Activated T-helper 2 cell treated with anti-CD3 and anti-CD28 coated beads, Interferon-gamma antibody, Interleukin-2, Interleukin-4, amounts not matched to agents 10 μg/mL and 5 μg/mL and 100 μg/mL, durations not matched to agents 14 hours and 24 hours and 36 hours (primary cell): ENCODE measurements at regions of chr1 and their contacts with region 1.

Region 1: GRCh38 chr1:82517586-82517985 is 716.9 kb downstream of the ADGRL2 start:
- DNase-seq: no peak
- H3K4me3 Mint-ChIP-seq: no peak overlapping the region
- H3K27ac Mint-ChIP-seq: no peak overlapping the region
- H3K4me1 Mint-ChIP-seq: no peaks in the 10 kb centered on the region
- H3K27me3 Mint-ChIP-seq: no peaks in the 10 kb centered on the region

Region 2: GRCh38 chr1:82449658-82450057 is 67.9 kb before region 1 on chr1:
- intact Hi-C with region 1: loop called (anchors 10 kb)
- DNase-seq: no peak
- H3K4me3 Mint-ChIP-seq: no peak overlapping the region
- H3K27ac Mint-ChIP-seq: no peak overlapping the region
- H3K4me1 Mint-ChIP-seq: peaks cover 4% of the 10 kb centered on the region
- H3K27me3 Mint-ChIP-seq: no peaks in the 10 kb centered on the region

Region 3: GRCh38 chr1:82485591-82486309 is 31.8 kb before region 1 on chr1:
- intact Hi-C with region 1: no loop called
- DNase-seq: no peak
- H3K4me3 Mint-ChIP-seq: no peak overlapping the region
- H3K27ac Mint-ChIP-seq: no peak overlapping the region
- H3K4me1 Mint-ChIP-seq: no peaks in the 10 kb centered on the region
- H3K27me3 Mint-ChIP-seq: no peaks in the 10 kb centered on the region